Gastrocnemius medialis (tissue), 4 donors: ENCODE measurements at regions of chr1 and their contacts with region 1.

Region 1: GRCh38 chr1:150813058-150813707 is 5.1 kb upstream of the CTSK start:
- DNase-seq: peak in 1 of 2 donors; percentile 39
- ATAC-seq: no peak
- H3K4me3 ChIP-seq: no peak overlapping the region
- H3K27ac ChIP-seq: peak overlapping the region in 1 of 4 donors; percentile 14
- H3K4me1 ChIP-seq: peaks cover 0 to 3% of the 10 kb centered on the region in 2 donors
- H3K27me3 ChIP-seq: no peaks in the 10 kb centered on the region
- CTCF ChIP-seq: peak in 3 of 5 experiments; percentile 39 to 47 (median 41)
- POLR2A ChIP-seq: no peak

Region 2: DNA sequence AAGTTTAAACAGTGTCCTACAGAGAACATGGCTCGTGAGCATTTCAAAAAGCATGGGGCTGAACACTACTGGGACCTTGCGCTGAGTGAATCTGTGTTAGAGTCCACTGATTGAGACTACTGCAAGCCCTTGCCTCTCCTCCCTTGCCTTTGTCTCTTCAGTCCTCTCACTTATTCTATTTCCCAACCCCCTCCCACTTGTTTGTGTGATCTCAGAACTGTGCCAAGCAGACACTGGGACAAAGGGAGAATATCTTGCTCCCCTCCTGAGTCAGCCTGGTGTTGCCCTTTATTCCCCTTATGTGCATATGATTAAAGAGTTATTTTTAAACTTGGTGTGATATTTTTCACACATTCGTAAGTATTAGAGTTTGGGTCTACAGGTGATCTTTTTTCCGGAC is 460.3 kb before region 1 on chr1:
- in situ Hi-C with region 1: no loop called
- intact Hi-C with region 1: loop called (anchors 10 kb)
- DNase-seq: no peak
- ATAC-seq: no peak
- H3K4me3 ChIP-seq: no peak overlapping the region
- H3K27ac ChIP-seq: no peak overlapping the region
- H3K4me1 ChIP-seq: no peaks in the 10 kb centered on the region
- H3K27me3 ChIP-seq: no peaks in the 10 kb centered on the region
- CTCF ChIP-seq: no peak
- POLR2A ChIP-seq: no peak

Region 3: DNA sequence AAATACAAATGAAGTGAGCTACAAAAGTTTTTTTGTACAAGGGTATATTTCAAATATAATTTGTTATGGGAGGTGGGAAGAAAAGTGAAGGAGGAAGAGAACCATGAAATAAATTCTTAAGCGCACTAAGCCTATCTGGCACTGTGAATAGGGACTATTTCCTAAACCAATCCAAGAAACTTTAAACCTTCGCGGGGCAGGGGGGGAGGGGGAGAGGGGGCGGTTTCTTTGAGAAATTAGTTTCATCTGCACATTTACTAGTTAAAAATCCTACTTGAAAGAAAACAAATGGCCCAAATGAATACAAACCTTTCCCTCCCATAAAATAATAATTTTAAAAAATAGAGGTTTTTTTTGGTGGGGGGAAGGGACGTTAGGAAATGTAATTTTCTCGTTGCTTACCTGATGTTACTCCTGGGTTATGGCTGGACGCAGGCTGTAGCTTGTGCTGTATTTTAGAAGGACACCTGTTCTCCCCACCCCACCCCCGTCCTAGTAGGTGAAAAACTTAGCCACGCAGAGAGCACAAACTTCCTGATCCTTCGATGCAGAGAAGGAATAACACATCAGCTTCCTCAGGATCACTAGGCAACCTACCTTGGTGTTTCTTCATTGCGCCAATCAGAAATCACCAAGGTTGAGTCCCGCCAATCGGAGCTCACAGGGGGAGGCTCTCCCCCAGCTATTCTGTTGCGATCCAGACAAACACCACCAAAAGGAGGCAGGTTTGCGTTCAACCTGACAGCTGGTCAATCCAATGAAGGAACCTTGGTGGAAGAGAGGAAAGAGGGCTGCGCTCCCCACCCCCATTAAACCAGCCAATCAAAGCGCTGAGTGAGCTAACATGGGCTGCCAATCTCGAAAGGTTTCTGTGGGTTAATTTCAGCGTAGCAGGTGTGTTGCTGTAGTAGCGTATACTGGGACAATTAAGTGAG is 116.3 kb before region 1 on chr1 and contains the start of gene GOLPH3L:
- in situ Hi-C with region 1: no loop called
- intact Hi-C with region 1: no loop called
- DNase-seq: peak; percentile 97 to 98
- ATAC-seq: peak; percentile 100
- H3K4me3 ChIP-seq: peak within 1 kb of the TSS; percentile 77 to 82 (median 80)
- H3K27ac ChIP-seq: peak within 1 kb of the TSS; percentile 76 to 89 (median 83)
- H3K4me1 ChIP-seq: peaks cover 9 to 18% of the 10 kb centered on the region in 2 donors
- H3K27me3 ChIP-seq: no peaks in the 10 kb centered on the region
- CTCF ChIP-seq: peak in 1 of 5 experiments; percentile 15
- POLR2A ChIP-seq: peak; percentile 32 to 58
- total RNA-seq, gene GOLPH3L: 9.8 to 18.6 (median 15.7) TPM

Region 4: GRCh38 chr1:150753416-150753815 is 59.8 kb before region 1 on chr1:
- in situ Hi-C with region 1: loop called in 1 of 4 experiments (anchors 10 kb)
- intact Hi-C with region 1: no loop called
- DNase-seq: no peak
- ATAC-seq: no peak
- H3K4me3 ChIP-seq: no peak overlapping the region
- H3K27ac ChIP-seq: no peak overlapping the region
- H3K4me1 ChIP-seq: no peaks in the 10 kb centered on the region
- H3K27me3 ChIP-seq: no peaks in the 10 kb centered on the region
- CTCF ChIP-seq: no peak
- POLR2A ChIP-seq: no peak